ENCODE measurements at regions of chr13 and their contacts with region 1.

Region 1: GRCh38 chr13:48769107-48769704 is 115.5 kb downstream of the CYSLTR2 start:
- DNase-seq: peak; percentile 81
- H3K4me3 Mint-ChIP-seq: no peak overlapping the region
- H3K27ac Mint-ChIP-seq: no peak overlapping the region
- H3K4me1 Mint-ChIP-seq: peaks cover 27% of the 10 kb centered on the region
- H3K27me3 Mint-ChIP-seq: peaks cover 8% of the 10 kb centered on the region

Region 2: GRCh38 chr13:47499358-47500150 is 1269.7 kb before region 1 on chr13:
- CTCF ChIA-PET with region 1: no interaction called
- POLR2A ChIA-PET with region 1: no interaction called
- intact Hi-C with region 1: no loop called
- DNase-seq: no peak
- H3K4me3 Mint-ChIP-seq: no peak overlapping the region
- H3K27ac Mint-ChIP-seq: no peak overlapping the region
- H3K4me1 Mint-ChIP-seq: no peaks in the 10 kb centered on the region
- H3K27me3 Mint-ChIP-seq: no peaks in the 10 kb centered on the region

Region 3: GRCh38 chr13:48334534-48335127 is 434.6 kb before region 1 on chr13:
- CTCF ChIA-PET with region 1: interaction called, 48 read pairs
- POLR2A ChIA-PET with region 1: no interaction called
- intact Hi-C with region 1: loop called (anchors 1 kb)
- DNase-seq: no peak
- H3K4me3 Mint-ChIP-seq: no peak overlapping the region
- H3K27ac Mint-ChIP-seq: no peak overlapping the region
- H3K4me1 Mint-ChIP-seq: peaks cover 5% of the 10 kb centered on the region
- H3K27me3 Mint-ChIP-seq: no peaks in the 10 kb centered on the region

Region 4: GRCh38 chr13:48595431-48596429 is 173.5 kb before region 1 on chr13:
- CTCF ChIA-PET with region 1: interaction called, 136 read pairs
- POLR2A ChIA-PET with region 1: no interaction called
- intact Hi-C with region 1: loop called (anchors 1 kb)
- DNase-seq: peak; percentile 67
- H3K4me3 Mint-ChIP-seq: no peak overlapping the region
- H3K27ac Mint-ChIP-seq: no peak overlapping the region
- H3K4me1 Mint-ChIP-seq: peaks cover 2% of the 10 kb centered on the region
- H3K27me3 Mint-ChIP-seq: no peaks in the 10 kb centered on the region

Region 5: DNA sequence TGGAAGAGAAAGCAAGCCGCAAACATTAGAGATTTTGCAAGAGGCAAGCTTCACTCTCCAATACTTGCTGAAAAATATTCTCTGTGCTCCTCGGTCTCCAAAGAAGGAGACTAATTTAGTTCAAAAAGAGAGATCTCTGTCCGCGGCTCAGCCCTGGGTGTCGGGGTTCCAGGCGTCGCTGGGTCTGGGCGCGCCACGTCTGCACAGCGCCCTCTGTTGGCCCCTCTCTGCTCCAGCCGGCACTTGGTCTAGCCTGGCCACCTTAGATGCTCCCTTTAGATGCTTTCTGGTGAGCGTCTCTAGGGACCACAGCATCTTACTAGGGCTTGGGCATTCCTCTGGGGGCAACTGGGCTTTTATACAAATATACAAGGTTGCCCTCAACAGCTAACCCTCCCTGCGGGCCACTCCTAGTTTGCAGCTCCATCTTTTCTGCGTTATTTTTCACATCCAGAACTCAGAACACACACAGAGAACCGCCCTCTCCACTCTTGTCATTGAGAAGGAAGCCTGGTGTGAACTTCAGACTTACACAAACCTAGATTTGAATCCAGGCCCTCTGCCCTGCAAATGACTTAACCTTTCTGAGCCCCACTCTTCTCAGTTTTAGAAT is 37.1 kb before region 1 on chr13:
- CTCF ChIA-PET with region 1: interaction called, 33 read pairs
- POLR2A ChIA-PET with region 1: no interaction called
- intact Hi-C with region 1: loop called (anchors 1 kb)
- DNase-seq: peak; percentile 70
- H3K4me3 Mint-ChIP-seq: peak overlapping the region; percentile 50
- H3K27ac Mint-ChIP-seq: no peak overlapping the region
- H3K4me1 Mint-ChIP-seq: peaks cover 18% of the 10 kb centered on the region
- H3K27me3 Mint-ChIP-seq: no peaks in the 10 kb centered on the region